Motor neuron (in vitro differentiated cells): ENCODE measurements at regions of chr6 and their contacts with region 1.

Region 1: GRCh38 chr6:43070028-43070632 is 6.0 kb upstream of the PTK7 start:
- ATAC-seq: peak; percentile 46 to 92 (median 66)
- H3K4me3 ChIP-seq: no peak overlapping the region
- H3K27ac ChIP-seq: no peak overlapping the region
- H3K4me1 ChIP-seq: peaks cover 1 to 3% of the 10 kb centered on the region in 2 donors

Region 2: DNA sequence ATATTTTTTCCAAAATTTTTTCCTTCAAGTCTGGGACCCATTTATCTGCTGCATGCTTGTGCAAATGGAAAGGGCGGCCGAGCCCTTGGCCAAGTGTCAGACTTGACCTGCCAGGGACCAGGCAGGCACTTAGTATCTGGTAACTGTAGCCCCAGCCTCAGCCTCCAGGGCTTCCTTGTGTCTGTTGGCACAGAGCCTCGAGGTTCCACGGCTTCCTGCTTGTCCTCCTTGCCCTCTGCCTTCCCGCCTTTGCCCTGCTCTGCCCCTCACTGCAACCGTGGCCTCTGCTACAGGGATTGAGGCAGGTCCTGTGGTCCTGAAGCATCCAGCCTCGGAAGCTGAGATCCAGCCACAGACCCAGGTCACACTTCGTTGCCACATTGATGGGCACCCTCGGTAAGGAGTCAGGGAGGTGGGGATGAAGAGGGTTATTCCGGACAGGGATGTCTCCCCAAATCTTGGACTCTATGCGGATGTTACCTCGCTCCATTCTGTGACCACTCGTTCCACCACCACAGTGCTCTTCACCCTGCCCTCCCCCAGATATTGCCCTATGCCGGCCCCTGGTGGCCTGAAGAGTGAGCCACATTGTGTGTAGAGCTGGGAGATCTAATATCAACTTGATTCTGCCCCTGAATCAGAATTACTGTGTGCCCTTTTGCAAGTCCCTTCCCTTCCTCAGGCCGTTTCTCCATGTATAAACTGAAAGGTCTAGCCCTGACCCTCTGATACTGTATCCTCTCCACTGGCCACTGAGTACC is 59.5 kb after region 1 on chr6:
- in situ Hi-C with region 1: loop called in 3 of 9 experiments (anchors 10 kb)
- ATAC-seq: peak; percentile 62 to 96 (median 89)
- H3K4me3 ChIP-seq: no peak overlapping the region
- H3K27ac ChIP-seq: no peak overlapping the region
- H3K4me1 ChIP-seq: no peaks in the 10 kb centered on the region

Region 3: DNA sequence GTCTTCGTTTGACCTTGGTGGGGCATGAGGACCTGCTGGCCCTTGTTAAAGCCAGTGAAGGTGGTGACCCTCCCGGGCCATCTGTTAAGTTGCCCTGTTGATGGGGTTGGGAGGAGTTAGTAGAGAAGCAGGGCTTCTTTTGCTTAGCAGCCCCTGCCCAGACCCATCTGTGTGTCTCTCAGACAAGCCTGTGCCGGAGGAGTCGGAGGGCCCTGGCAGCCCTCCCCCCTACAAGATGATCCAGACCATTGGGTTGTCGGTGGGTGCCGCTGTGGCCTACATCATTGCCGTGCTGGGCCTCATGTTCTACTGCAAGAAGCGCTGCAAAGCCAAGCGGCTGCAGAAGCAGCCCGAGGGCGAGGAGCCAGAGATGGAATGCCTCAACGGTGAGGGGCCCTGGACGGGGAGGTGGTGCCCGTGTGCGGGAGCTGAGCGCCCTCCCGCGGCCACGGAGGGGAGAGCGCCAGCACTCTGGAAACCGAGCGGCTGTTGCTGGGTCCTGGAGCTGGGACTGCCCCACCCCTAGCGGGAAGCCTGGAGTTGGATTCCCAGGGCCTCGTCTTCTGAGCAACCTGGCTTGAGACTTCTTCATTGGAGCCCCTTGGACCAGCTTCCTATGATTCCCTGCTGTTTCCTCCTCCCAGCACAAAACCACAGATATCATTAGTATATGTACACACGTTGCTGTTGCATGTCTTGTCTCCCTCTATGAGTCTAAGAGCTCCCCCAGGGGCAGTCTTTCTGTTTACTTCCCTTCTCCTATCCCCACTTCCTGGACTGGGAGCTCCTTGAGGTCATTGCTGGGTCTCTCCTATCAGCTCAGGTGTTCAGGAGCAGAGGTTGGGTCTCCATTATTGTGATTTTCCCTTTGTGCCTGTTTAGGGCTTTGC is 73.3 kb after region 1 on chr6:
- in situ Hi-C with region 1: loop called in 3 of 9 experiments (anchors 10 kb)
- ATAC-seq: peak; percentile 93 to 98 (median 96)
- H3K4me3 ChIP-seq: no peak overlapping the region
- H3K27ac ChIP-seq: peak overlapping the region; percentile 8 to 68
- H3K4me1 ChIP-seq: peaks cover 8 to 12% of the 10 kb centered on the region in 2 donors

Region 4: GRCh38 chr6:43465948-43466347 is 395.8 kb after region 1 on chr6:
- in situ Hi-C with region 1: no loop called
- ATAC-seq: no peak
- H3K4me3 ChIP-seq: no peak overlapping the region
- H3K27ac ChIP-seq: no peak overlapping the region
- H3K4me1 ChIP-seq: peaks cover 0 to 6% of the 10 kb centered on the region in 2 donors